ENCODE measurements at regions of chr11 and their contacts with region 1.

Region 1: GRCh38 chr11:77557554-77557953 is 32.2 kb upstream of the AQP11 start:
- DNase-seq: no peak
- H3K4me3 ChIP-seq: no peak overlapping the region
- H3K27ac ChIP-seq: no peak overlapping the region
- H3K4me1 ChIP-seq: no peaks in the 10 kb centered on the region
- H3K27me3 ChIP-seq: no peaks in the 10 kb centered on the region
- CTCF ChIP-seq: peak in 2 of 5 experiments; percentile 10 to 16
- EP300 ChIP-seq: no peak
- POLR2A ChIP-seq: no peak

Region 2: DNA sequence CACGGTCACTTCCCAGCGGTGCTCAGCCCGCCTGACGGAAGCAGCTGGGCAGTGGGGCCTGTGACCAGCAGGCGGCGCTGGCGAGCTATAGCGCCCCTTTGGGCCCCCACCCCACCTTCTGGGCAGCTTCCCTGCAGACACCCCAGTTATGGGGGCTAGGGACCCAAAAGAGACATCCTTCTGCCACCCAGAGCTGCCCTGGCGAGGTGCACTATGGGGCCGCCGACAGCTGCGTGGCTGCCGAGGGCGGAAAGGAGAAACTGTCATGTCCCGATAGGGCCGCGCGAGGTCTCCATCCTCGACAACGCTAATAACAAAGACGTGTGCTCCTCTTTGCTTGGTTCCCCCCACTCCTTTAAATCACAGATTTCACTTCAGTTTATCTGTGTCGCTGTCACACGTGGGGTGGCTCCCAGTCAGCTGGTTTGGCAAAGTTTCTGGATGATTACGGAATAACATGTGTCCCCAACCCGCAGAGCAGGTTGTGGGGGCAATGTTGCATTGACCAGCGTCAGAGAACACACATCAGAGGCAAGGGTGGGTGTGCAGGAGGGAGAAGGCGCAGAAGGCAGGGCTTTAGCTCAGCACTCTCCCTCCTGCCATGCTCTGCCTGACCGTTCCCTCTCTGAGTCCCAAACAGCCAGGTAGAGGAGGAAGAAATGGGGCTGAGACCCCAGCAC is 430.2 kb before region 1 on chr11:
- in situ Hi-C with region 1: no loop called
- intact Hi-C with region 1: loop called (anchors 10 kb)
- DNase-seq: peak; percentile 68
- H3K4me3 ChIP-seq: peak overlapping the region; percentile 2 to 47 (median 18)
- H3K27ac ChIP-seq: peak overlapping the region in 2 of 4 donors; percentile 2 to 8
- H3K4me1 ChIP-seq: peaks cover 9 to 28% (median 15%) of the 10 kb centered on the region in 4 donors
- H3K27me3 ChIP-seq: no peaks in the 10 kb centered on the region
- CTCF ChIP-seq: peak; percentile 99 to 100 (median 99)
- EP300 ChIP-seq: no peak
- POLR2A ChIP-seq: peak; percentile 3

Measured in transverse colon (tissue), 4 donors.